ENCODE measurements at regions of chr11 and their contacts with region 1.

Region 1: DNA sequence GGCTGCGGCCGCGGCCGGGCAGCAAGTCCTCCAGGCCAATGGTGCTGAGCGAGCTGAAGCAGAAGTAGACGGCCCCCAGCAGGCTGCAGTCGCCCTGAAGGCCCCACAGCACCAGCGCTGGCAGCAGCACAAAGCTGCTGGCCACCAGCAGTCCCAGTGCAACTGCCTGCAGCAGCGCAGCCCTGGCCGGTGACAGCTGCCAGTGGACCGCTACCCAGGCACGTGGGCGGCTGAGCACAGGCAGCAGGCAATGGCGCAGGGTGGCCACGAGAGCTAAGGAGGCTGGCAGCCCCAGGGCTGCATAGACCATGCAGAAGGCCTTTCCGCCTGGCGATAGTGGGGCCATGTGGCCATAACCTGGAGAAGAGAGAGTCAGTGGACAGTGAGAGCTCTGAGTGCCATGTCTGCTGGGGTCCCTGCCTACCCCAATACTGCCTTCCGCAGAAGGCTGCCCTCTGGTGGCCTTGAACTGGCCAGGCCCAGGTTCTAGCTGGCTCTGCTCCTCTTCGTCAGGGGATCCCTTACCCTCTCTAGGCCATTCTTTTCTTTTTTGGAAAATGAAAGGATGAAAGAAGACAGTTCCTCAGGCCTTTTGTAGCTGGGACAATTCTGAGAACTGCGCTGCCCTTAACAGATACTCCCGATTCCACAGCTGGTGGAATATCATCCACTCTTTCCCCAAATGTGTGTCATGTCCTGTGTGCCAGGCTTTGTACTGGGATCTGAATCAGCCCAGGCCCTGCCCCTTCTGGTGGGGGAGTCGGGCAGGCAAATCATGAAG is 1.9 kb downstream of the KCNK7 start:
- DNase-seq: peak; percentile 84
- H3K4me3 ChIP-seq: no peak overlapping the region; a peak in 1 of 4 replicates
- H3K27ac ChIP-seq: peak overlapping the region in 1 of 2 experiments; percentile 25; a peak in 1 of 4 replicates
- H3K4me1 ChIP-seq: peaks cover 0 to 12% of the 10 kb centered on the region in 2 experiments; a peak in 1 of 4 replicates
- H3K27me3 ChIP-seq: no peaks in the 10 kb centered on the region
- CTCF ChIP-seq: peak; percentile 68
- EP300 ChIP-seq: no peak
- RAD21 ChIP-seq: peak; percentile 42

Region 2: DNA sequence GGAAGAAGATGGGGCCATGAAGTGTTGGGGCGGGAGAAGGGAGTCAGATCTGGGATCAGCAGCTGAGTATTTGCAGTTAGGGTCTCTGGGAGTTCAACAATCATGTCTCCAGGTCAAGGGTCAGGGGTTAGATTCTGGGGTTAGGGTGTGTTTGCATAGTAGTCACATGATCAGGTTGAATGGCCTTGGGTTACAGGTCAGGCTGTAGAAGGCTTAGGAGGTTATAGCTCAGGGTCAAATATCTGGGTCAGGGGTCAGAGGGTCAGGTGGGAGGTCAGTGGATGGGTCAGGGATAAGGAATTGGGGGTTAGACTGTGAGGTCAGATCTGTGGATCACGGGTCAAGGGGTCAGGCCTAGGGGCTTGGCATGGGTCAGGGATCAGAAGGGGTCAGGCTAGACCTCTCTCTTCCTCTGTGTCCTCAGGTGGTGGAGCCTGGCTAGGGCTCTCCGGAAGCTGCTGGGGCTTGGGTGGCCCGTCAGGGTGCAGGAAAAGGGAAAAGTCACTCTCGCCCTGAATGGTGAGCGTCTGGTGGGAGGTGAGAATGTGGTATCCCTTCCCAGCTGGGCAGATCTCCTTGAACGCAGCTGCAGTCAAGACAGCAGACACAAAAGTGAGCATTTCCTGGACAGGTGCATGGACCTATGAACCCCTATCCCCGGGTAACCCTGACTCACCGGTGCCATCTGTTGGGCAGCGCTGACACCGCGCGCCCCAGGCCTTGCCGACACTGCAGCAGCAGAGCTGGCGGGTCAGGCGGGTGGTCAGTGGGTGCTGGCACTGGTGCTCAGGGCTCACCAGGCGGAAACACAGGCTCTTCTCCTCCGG is 41.9 kb before region 1 on chr11:
- CTCF ChIA-PET with region 1: interaction called, 13 read pairs
- POLR2A ChIA-PET with region 1: no interaction called
- DNase-seq: peak; percentile 85
- H3K4me3 ChIP-seq: no peak overlapping the region
- H3K27ac ChIP-seq: no peak overlapping the region
- H3K4me1 ChIP-seq: peaks cover 16 to 27% of the 10 kb centered on the region in 2 experiments; a peak in 3 of 4 replicates
- H3K27me3 ChIP-seq: no peaks in the 10 kb centered on the region
- CTCF ChIP-seq: peak; percentile 62
- EP300 ChIP-seq: no peak
- RAD21 ChIP-seq: peak; percentile 43

Region 3: GRCh38 chr11:65558002-65558931 is 35.4 kb before region 1 on chr11 and contains the start of gene LTBP3:
- CTCF ChIA-PET with region 1: interaction called, 10 read pairs
- POLR2A ChIA-PET with region 1: interaction called, 4 read pairs
- DNase-seq: peak; percentile 90
- H3K4me3 ChIP-seq: peak within 1 kb of the TSS; percentile 65 to 85
- H3K27ac ChIP-seq: peak within 1 kb of the TSS; percentile 97
- H3K4me1 ChIP-seq: peaks cover 53 to 67% of the 10 kb centered on the region in 2 experiments
- H3K27me3 ChIP-seq: no peaks in the 10 kb centered on the region
- CTCF ChIP-seq: no peak
- EP300 ChIP-seq: peak in 1 of 2 experiments; percentile 50; a peak in 1 of 4 replicates
- RAD21 ChIP-seq: no peak
- polyA plus RNA-seq, gene LTBP3: 92.1 and 167 TPM in 2 replicates

Region 4: GRCh38 chr11:65606876-65607613 is 13.3 kb after region 1 on chr11:
- CTCF ChIA-PET with region 1: interaction called, 48 read pairs
- POLR2A ChIA-PET with region 1: interaction called, 15 read pairs
- DNase-seq: peak; percentile 100
- H3K4me3 ChIP-seq: peak overlapping the region in 1 of 2 experiments; percentile 33; a peak in 2 of 4 replicates
- H3K27ac ChIP-seq: peak overlapping the region; percentile 11 to 56; a peak in 2 of 4 replicates
- H3K4me1 ChIP-seq: peaks cover 14 to 21% of the 10 kb centered on the region in 2 experiments; a peak in 2 of 4 replicates
- H3K27me3 ChIP-seq: no peaks in the 10 kb centered on the region
- CTCF ChIP-seq: no peak
- EP300 ChIP-seq: no peak
- RAD21 ChIP-seq: no peak

Region 5: GRCh38 chr11:65615229-65615941 is 21.7 kb after region 1 on chr11 and contains the start of gene PCNX3:
- CTCF ChIA-PET with region 1: interaction called, 15 read pairs
- POLR2A ChIA-PET with region 1: interaction called, 5 read pairs
- DNase-seq: peak; percentile 100
- H3K4me3 ChIP-seq: peak within 1 kb of the TSS; percentile 87 to 95
- H3K27ac ChIP-seq: peak within 1 kb of the TSS; percentile 83 to 93
- H3K4me1 ChIP-seq: peaks cover 25 to 36% of the 10 kb centered on the region in 2 experiments; a peak in 3 of 4 replicates
- H3K27me3 ChIP-seq: no peaks in the 10 kb centered on the region
- CTCF ChIP-seq: no peak
- EP300 ChIP-seq: peak in 1 of 2 experiments; percentile 39; a peak in 1 of 4 replicates
- RAD21 ChIP-seq: no peak
- polyA plus RNA-seq, gene PCNX3: 23.8 and 33.7 TPM in 2 replicates

Measured in SK-N-SH (cell line).